ENCODE measurements at regions of chr12 and their contacts with region 1.

Region 1: DNA sequence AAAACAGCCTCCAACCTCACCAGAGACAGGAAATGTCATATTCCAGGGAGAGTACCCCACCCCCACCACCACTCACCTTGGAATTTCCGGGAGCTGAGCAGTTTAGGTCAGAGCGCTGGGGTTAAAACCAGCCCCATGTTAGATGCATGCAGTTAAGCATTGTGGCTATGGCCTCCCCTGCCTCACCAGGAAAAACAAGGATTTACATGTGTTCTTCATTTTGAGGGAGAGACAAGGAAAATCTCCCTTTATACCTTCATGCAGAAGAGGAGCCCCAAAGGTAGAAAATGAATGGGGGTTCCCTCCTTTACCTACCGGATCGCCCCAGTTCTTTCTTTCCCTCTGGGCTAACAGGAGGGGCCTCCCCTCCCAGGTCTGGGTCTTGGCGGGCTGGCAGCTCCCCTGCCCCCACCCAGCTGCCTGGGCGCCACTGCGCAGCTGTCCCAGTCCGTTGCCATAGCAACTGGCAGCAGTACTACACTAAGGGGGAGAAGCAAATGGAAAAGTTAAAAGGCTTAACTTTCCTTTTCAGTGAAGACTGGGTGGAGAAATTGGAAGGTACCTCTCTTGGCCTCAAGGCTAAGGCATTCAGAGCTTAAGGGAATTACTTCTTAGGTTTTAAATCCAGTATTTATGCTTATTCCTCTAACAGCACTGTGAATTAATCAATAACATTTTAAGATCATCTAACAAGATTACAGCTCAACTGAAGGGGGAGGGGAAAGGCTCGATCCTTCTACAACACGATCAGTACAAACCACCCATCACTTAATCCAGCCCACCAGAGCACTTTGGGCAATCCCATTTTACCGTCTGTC is 20.5 kb downstream of the CBX5 start:
- DNase-seq: peak; percentile 82
- CTCF ChIP-seq: no peak

Region 2: GRCh38 chr12:54279866-54280467 is 20.6 kb after region 1 on chr12 and contains the start of gene CBX5:
- CTCF ChIA-PET with region 1: interaction called, 15 read pairs
- POLR2A ChIA-PET with region 1: interaction called, 21 read pairs
- DNase-seq: peak; percentile 96
- CTCF ChIP-seq: no peak